ENCODE measurements at regions of chrX and their contacts with region 1.

Region 1: DNA sequence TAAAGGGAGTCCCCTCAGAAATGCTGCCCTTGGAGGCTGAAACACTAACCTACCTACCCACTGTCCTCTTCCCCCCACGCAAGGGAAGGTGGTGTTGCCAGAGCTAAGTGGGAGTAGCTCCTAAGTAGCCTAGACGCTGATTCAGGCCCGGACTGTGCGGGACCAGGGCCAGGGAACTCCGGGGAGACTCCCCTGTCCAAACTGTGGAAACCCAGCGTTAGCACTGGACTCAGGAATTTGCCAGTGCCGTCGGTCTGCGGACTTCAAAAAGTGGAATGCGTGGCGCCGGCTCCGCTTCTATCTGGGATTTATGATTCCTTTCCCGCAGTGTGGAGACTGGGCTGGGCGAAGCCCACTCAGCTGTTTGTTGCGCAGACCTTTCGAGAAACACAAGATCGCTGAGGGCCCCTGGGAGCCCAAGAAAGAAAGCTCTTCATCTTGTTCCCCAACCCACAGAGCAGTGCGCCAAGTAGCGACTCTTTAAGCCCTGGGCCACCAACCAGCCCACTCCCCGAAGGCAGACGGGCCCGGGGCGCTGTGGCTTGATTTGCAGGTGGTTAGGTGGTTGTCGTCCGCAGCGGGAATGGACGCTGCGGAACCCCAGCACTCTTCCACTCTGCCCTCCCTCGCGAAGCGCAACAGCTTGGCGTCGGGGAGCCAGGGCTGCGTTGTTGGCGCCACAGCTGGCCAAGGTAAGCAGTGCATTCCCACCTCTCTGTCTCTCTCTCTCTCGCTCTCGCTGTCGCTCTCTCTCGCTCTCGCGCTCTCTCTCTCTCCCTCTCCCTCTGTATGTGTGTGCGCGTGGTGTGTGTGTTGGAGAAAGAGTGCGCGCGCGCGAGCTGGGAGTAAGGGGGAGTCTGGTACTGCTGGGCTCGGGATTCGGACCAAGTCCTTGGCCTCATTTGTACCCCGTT is 2.0 kb downstream of the TMEM255A start:
- H3K4me3 ChIP-seq: peak overlapping the region; percentile 36
- H3K27ac ChIP-seq: no peak overlapping the region
- H3K4me1 ChIP-seq: peaks cover 5% of the 10 kb centered on the region
- CTCF ChIP-seq: peak; percentile 94

Region 2: DNA sequence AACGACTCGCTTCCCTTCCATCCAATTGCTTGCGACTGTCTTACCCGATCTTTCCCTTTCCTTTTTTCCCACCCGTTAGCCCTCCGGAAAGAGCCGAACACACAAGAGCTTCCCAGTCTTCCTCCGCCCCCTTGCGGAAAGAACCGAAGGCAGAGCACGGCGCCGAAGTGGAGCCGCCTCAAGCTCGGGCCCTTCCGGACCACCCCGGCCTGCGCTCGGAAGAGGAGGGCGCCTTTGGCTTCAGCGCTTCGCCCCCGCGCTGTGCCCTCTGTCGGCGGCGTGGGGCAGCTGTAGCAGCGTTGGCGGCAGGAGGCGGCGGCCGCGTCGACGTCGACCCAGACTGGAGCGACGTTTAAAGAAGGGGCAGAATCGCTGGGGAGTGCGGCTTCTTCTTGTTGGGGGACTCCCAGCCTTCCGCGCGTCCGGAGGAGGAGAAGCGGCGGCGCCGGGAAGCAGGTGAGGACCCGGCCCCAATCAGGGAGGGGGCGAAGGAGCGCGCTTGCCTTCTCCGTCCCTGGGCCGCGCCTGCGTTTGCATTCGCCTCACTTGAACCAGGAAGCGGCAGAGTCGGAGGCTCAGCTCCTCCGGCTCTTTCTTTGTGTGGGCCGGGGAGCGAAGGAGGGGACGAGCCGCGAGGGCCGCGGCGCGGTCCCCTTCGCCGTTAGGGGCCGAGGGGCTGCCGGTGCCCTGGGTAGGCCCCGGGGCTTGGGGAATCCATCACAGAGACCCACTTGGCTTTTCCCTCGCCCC is 58.5 kb before region 1 on chrX and contains the start of gene ZBTB33:
- CTCF ChIA-PET with region 1: interaction called, 8 read pairs
- POLR2A ChIA-PET with region 1: interaction called, 24 read pairs
- H3K4me3 ChIP-seq: peak within 1 kb of the TSS; percentile 69
- H3K27ac ChIP-seq: peak within 1 kb of the TSS; percentile 94
- H3K4me1 ChIP-seq: no peaks in the 10 kb centered on the region
- CTCF ChIP-seq: peak; percentile 97

Region 3: GRCh38 chrX:120287513-120288112 is 21.6 kb before region 1 on chrX:
- CTCF ChIA-PET with region 1: no interaction called
- POLR2A ChIA-PET with region 1: no interaction called
- H3K4me3 ChIP-seq: no peak overlapping the region
- H3K27ac ChIP-seq: no peak overlapping the region
- H3K4me1 ChIP-seq: no peaks in the 10 kb centered on the region
- CTCF ChIP-seq: no peak

Measured in HEK293 (cell line).